ENCODE measurements at regions of chr4 and their contacts with region 1.

Region 1: GRCh38 chr4:88456757-88457306 is at the start of gene HERC5:
- DNase-seq: peak; percentile 94
- H3K4me3 ChIP-seq: peak within 1 kb of the TSS; percentile 81
- H3K27ac ChIP-seq: peak within 1 kb of the TSS; percentile 63
- H3K4me1 ChIP-seq: no peaks in the 10 kb centered on the region
- H3K27me3 ChIP-seq: no peaks in the 10 kb centered on the region
- CTCF ChIP-seq: peak; percentile 34
- total RNA-seq, gene HERC5: 0.79 to 1.4 TPM

Region 2: GRCh38 chr4:88033309-88033708 is 423.5 kb before region 1 on chr4:
- intact Hi-C with region 1: loop called (anchors 10 kb)
- DNase-seq: peak; percentile 60
- H3K4me3 ChIP-seq: no peak overlapping the region
- H3K27ac ChIP-seq: no peak overlapping the region
- H3K4me1 ChIP-seq: no peaks in the 10 kb centered on the region
- H3K27me3 ChIP-seq: no peaks in the 10 kb centered on the region
- CTCF ChIP-seq: peak; percentile 60

Region 3: GRCh38 chr4:88217920-88218319 is 238.9 kb before region 1 on chr4:
- intact Hi-C with region 1: loop called (anchors 2 kb)
- DNase-seq: no peak
- H3K4me3 ChIP-seq: no peak overlapping the region
- H3K27ac ChIP-seq: no peak overlapping the region
- H3K4me1 ChIP-seq: no peaks in the 10 kb centered on the region
- H3K27me3 ChIP-seq: no peaks in the 10 kb centered on the region
- CTCF ChIP-seq: no peak

Region 4: GRCh38 chr4:88378691-88379559 is 77.9 kb before region 1 on chr4 and contains the start of gene HERC6:
- intact Hi-C with region 1: loop called (anchors 2 kb)
- DNase-seq: peak; percentile 82
- H3K4me3 ChIP-seq: peak within 1 kb of the TSS; percentile 94
- H3K27ac ChIP-seq: peak within 1 kb of the TSS; percentile 97
- H3K4me1 ChIP-seq: no peaks in the 10 kb centered on the region
- H3K27me3 ChIP-seq: no peaks in the 10 kb centered on the region
- CTCF ChIP-seq: peak; percentile 69
- total RNA-seq, gene HERC6: 6.2 to 6.3 TPM

Region 5: GRCh38 chr4:88514557-88515511 is 58.0 kb after region 1 on chr4:
- intact Hi-C with region 1: loop called (anchors 5 kb)
- DNase-seq: no peak
- H3K4me3 ChIP-seq: no peak overlapping the region
- H3K27ac ChIP-seq: no peak overlapping the region
- H3K4me1 ChIP-seq: no peaks in the 10 kb centered on the region
- H3K27me3 ChIP-seq: no peaks in the 10 kb centered on the region
- CTCF ChIP-seq: no peak

Measured in colonic mucosa (tissue), 4 donors.